HepG2 (cell line): ENCODE measurements at regions of chr18 and their contacts with region 1.

Region 1: GRCh38 chr18:36255072-36255698 is 42.3 kb upstream of the FHOD3 start:
- DNase-seq: peak; percentile 84
- ATAC-seq: peak; percentile 99
- H3K4me3 ChIP-seq: peak overlapping the region in 1 of 3 experiments; percentile 8; a peak in 1 of 6 replicates
- H3K27ac ChIP-seq: peak overlapping the region; percentile 60
- H3K4me1 ChIP-seq: peaks cover 27% of the 10 kb centered on the region
- H3K27me3 ChIP-seq: no peaks in the 10 kb centered on the region
- CTCF ChIP-seq: no peak
- EP300 ChIP-seq: no peak
- POLR2A ChIP-seq: no peak
- RAD21 ChIP-seq: no peak

Region 2: GRCh38 chr18:36217348-36217747 is 37.8 kb before region 1 on chr18:
- CTCF ChIA-PET with region 1: no interaction called
- POLR2A ChIA-PET with region 1: no interaction called
- in situ Hi-C with region 1: no loop called
- intact Hi-C with region 1: loop called (anchors 2 kb)
- DNase-seq: peak; percentile 57
- ATAC-seq: peak; percentile 99
- H3K4me3 ChIP-seq: no peak overlapping the region
- H3K27ac ChIP-seq: no peak overlapping the region
- H3K4me1 ChIP-seq: peaks cover 17% of the 10 kb centered on the region
- H3K27me3 ChIP-seq: no peaks in the 10 kb centered on the region
- CTCF ChIP-seq: no peak
- EP300 ChIP-seq: no peak
- POLR2A ChIP-seq: no peak
- RAD21 ChIP-seq: no peak

Region 3: DNA sequence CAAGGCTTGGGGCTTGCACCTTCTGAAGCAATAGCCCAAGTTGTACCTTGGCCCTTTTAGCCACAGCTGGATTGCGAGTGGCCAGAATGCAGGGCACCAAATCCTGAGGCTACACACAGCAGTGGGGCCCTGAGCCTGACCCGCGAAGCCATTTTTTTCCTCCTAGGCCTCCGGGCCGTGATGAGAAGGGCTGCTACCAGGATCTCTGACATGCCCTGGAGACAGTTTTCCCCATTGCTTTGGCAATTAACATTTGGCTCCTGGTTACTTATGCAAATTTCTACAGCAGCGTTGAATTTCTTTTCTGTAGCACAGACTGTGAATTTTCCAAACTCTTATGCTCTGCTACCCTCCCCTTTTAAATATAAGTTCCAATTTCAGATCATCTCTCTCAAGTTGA is 13.4 kb before region 1 on chr18:
- CTCF ChIA-PET with region 1: no interaction called
- POLR2A ChIA-PET with region 1: no interaction called
- in situ Hi-C with region 1: no loop called
- intact Hi-C with region 1: no loop called
- DNase-seq: no peak
- ATAC-seq: peak; percentile 24; the same call in 1 of the 3 replicates
- H3K4me3 ChIP-seq: no peak overlapping the region
- H3K27ac ChIP-seq: no peak overlapping the region
- H3K4me1 ChIP-seq: peaks cover 30% of the 10 kb centered on the region
- H3K27me3 ChIP-seq: no peaks in the 10 kb centered on the region
- CTCF ChIP-seq: no peak
- EP300 ChIP-seq: no peak
- POLR2A ChIP-seq: no peak
- RAD21 ChIP-seq: no peak